Ovary (tissue), 10 donors: ENCODE measurements at regions of chr3 and their contacts with region 1.

Region 1: GRCh38 chr3:105448338-105448982 is 81.8 kb downstream of the ALCAM start:
- DNase-seq: no peak
- H3K4me3 ChIP-seq: no peak overlapping the region
- H3K27ac ChIP-seq: no peak overlapping the region
- H3K4me1 ChIP-seq: no peaks in the 10 kb centered on the region
- H3K27me3 ChIP-seq: no peaks in the 10 kb centered on the region
- CTCF ChIP-seq: no peak
- EP300 ChIP-seq: no peak
- POLR2A ChIP-seq: no peak

Region 2: GRCh38 chr3:105394177-105394576 is 54.3 kb before region 1 on chr3:
- intact Hi-C with region 1: loop called in 1 of 4 experiments (anchors 2 kb)
- DNase-seq: no peak
- H3K4me3 ChIP-seq: no peak overlapping the region
- H3K27ac ChIP-seq: no peak overlapping the region
- H3K4me1 ChIP-seq: no peaks in the 10 kb centered on the region
- H3K27me3 ChIP-seq: no peaks in the 10 kb centered on the region
- CTCF ChIP-seq: no peak
- EP300 ChIP-seq: no peak
- POLR2A ChIP-seq: no peak